Ascending aorta (tissue), 2 donors: ENCODE measurements at regions of chr15 and their contacts with region 1.

Region 1: DNA sequence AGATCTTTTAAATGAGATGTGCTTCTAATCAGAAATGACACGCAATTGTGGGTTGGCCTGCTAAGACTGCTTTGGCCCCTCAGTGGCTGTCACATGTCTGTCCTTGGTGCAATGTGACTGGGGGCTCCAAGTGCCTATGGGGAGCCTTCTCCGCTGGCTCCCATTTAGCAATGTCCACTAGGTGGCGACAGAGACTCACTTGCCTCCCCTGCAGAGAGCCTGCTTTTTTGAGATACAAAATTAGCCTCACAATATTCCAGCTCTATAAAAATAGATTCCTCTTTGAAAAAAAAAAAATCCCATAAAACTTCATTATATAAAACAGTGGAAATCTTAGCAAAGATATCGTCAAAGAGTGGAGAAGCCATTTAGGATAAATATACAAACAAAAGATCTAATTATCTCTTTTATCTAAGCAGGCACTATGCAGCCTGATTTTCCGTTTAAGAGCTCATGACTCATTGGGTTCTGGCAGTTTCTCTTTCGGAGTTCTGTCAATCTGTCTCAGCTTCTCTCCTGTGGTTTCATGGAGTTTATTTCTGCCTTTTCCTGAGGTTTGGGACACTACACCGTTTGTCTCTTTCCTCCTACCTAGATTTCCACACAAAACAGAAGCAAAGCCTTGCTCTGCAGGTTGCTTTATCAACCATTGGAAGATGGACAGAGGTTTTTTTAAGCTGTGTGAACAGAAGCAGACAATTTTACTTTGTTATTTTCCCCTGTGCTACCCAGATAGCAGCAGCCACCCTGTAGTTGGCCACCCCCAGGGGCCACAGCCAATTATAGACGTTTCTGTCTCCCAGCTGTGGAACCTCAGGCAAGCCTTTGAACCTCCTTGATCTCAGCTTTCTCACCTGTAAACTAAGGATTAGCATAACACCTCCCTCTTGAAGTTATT is 68.4 kb upstream of the TNFAIP8L3 start:
- DNase-seq: peak in 1 of 2 donors; percentile 86
- H3K4me3 ChIP-seq: peak overlapping the region in 1 of 2 donors; percentile 35
- H3K27ac ChIP-seq: peak overlapping the region; percentile 77 to 81
- H3K4me1 ChIP-seq: peaks cover 0 to 4% of the 10 kb centered on the region in 2 donors
- H3K27me3 ChIP-seq: no peaks in the 10 kb centered on the region
- CTCF ChIP-seq: peak; percentile 82 to 97 (median 93)

Region 2: GRCh38 chr15:51093839-51094605 is 69.1 kb before region 1 on chr15:
- intact Hi-C with region 1: no loop called
- DNase-seq: peak in 1 of 2 donors; percentile 81
- H3K4me3 ChIP-seq: peak overlapping the region; percentile 67 to 92
- H3K27ac ChIP-seq: peak overlapping the region; percentile 92 to 95
- H3K4me1 ChIP-seq: peaks cover 0 to 27% of the 10 kb centered on the region in 2 donors
- H3K27me3 ChIP-seq: no peaks in the 10 kb centered on the region
- CTCF ChIP-seq: no peak

Region 3: DNA sequence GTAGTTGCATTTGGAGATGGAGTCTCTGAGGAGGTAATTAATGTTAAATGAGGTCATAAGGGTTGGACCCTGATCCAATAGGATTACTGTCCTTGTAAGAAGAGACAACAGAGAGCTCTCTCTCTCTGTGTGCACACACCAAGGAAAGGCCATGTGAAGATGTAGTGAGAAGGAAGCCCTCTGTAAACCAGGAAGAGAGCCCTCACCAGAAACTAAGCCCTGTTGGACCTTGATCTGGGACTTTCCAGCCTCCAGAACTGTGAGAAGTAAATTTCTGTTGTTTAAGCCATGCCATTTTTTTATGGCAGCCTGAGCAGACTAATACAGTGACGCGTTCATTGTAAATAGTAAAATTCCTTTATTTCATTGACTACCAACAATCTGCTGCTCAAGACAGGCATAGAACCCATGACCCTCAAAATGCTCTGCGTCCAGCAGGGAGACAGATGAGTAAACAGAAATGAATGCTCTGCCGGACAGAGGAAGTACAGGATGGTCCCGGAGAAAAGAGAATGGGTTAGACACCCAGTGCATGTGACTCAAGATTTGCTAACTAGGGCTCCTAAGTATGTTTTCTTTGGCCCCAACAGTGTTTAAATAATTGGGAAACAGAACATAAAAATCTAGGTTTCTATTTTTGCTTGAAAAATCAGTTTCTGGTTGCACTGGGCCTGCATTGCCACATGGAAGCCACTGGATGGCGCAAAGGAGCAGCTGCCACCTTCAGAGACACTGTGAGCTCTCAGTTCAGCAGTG is 30.6 kb before region 1 on chr15:
- intact Hi-C with region 1: loop called (anchors 1 kb)
- DNase-seq: peak in 1 of 2 donors; percentile 81
- H3K4me3 ChIP-seq: no peak overlapping the region
- H3K27ac ChIP-seq: peak overlapping the region; percentile 58 to 71
- H3K4me1 ChIP-seq: peaks cover 4 to 14% of the 10 kb centered on the region in 2 donors
- H3K27me3 ChIP-seq: no peaks in the 10 kb centered on the region
- CTCF ChIP-seq: peak; percentile 83 to 97 (median 93)

Region 4: GRCh38 chr15:51192521-51193280 is 29.6 kb after region 1 on chr15:
- intact Hi-C with region 1: loop called (anchors 1 kb)
- DNase-seq: peak; percentile 54 to 96
- H3K4me3 ChIP-seq: peak overlapping the region in 1 of 2 donors; percentile 26
- H3K27ac ChIP-seq: peak overlapping the region; percentile 78 to 84
- H3K4me1 ChIP-seq: peaks cover 7 to 42% of the 10 kb centered on the region in 2 donors
- H3K27me3 ChIP-seq: no peaks in the 10 kb centered on the region
- CTCF ChIP-seq: peak; percentile 86 to 94 (median 89)

Region 5: GRCh38 chr15:51227940-51228783 is 65.0 kb after region 1 on chr15:
- intact Hi-C with region 1: loop called (anchors 2 kb)
- DNase-seq: peak; percentile 19 to 81
- H3K4me3 ChIP-seq: no peak overlapping the region
- H3K27ac ChIP-seq: peak overlapping the region; percentile 56
- H3K4me1 ChIP-seq: peaks cover 0 to 17% of the 10 kb centered on the region in 2 donors
- H3K27me3 ChIP-seq: no peaks in the 10 kb centered on the region
- CTCF ChIP-seq: no peak

Region 6: GRCh38 chr15:51281368-51281967 is 118.4 kb after region 1 on chr15:
- intact Hi-C with region 1: loop called (anchors 5 kb)
- DNase-seq: peak; percentile 31 to 81
- H3K4me3 ChIP-seq: no peak overlapping the region
- H3K27ac ChIP-seq: peak overlapping the region in 1 of 2 donors; percentile 9
- H3K4me1 ChIP-seq: peaks cover 0 to 4% of the 10 kb centered on the region in 2 donors
- H3K27me3 ChIP-seq: no peaks in the 10 kb centered on the region
- CTCF ChIP-seq: peak; percentile 74 to 87 (median 76)

Region 7: DNA sequence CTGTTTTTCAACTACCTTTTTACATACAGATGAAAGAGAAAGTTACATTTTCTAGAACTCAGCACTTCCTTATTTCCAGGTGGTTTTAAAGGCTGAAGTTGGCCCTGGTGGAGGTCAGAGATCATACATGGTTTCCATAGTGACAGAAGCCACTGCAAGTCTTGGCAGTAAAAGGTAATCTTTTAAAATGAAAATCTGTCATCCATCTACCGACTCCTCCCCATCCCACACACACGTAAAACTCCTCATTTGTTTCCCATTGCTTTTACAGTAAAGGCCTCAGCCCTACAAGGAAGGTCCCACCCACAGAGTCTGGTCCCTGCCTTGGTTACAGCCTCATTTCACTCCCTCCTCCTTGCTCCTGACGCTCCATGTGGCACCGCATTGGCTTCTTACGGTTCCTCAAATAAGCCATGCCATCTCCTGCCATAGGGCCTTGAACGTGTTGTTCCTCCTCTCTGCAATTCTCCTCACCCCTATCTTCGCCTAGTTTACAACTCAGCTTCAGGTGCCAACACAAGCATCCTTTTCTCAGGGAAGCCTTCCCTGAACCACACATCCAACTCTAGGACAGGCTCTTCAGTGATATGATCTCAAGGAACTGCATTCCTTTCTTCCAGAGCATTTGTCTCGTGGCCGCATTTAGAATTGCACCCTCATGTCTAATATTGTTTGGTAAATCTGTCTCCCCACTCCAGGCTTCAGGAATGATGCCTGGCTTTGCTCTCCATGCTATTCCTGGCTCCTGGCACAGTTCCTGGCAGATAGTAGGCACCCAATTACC is 172.6 kb after region 1 on chr15:
- intact Hi-C with region 1: loop called (anchors 5 kb)
- DNase-seq: no peak
- H3K4me3 ChIP-seq: no peak overlapping the region
- H3K27ac ChIP-seq: peak overlapping the region; percentile 62 to 77
- H3K4me1 ChIP-seq: peaks cover 16 to 40% of the 10 kb centered on the region in 2 donors
- H3K27me3 ChIP-seq: no peaks in the 10 kb centered on the region
- CTCF ChIP-seq: peak in 1 of 3 experiments; percentile 15

Region 8: GRCh38 chr15:51380999-51381795 is 218.1 kb after region 1 on chr15:
- intact Hi-C with region 1: loop called (anchors 1 kb)
- DNase-seq: peak in 1 of 2 donors; percentile 85
- H3K4me3 ChIP-seq: no peak overlapping the region
- H3K27ac ChIP-seq: no peak overlapping the region
- H3K4me1 ChIP-seq: peaks cover 0 to 9% of the 10 kb centered on the region in 2 donors
- H3K27me3 ChIP-seq: no peaks in the 10 kb centered on the region
- CTCF ChIP-seq: peak; percentile 92 to 94 (median 92)